SK-N-SH (cell line): ENCODE measurements at regions of chr10 and their contacts with region 1.

Region 1: GRCh38 chr10:93376372-93377293 is 105.5 kb downstream of the MYOF start:
- DNase-seq: peak; percentile 72
- H3K4me3 ChIP-seq: no peak overlapping the region; a peak in 1 of 4 replicates
- H3K27ac ChIP-seq: peak overlapping the region; percentile 55 to 89
- H3K4me1 ChIP-seq: peaks cover 3 to 42% of the 10 kb centered on the region in 2 experiments
- H3K27me3 ChIP-seq: no peaks in the 10 kb centered on the region
- CTCF ChIP-seq: peak; percentile 95
- EP300 ChIP-seq: no peak
- RAD21 ChIP-seq: peak; percentile 98

Region 2: GRCh38 chr10:93062514-93063143 is 314.0 kb before region 1 on chr10:
- CTCF ChIA-PET with region 1: no interaction called
- POLR2A ChIA-PET with region 1: no interaction called
- DNase-seq: peak; percentile 30
- H3K4me3 ChIP-seq: no peak overlapping the region
- H3K27ac ChIP-seq: no peak overlapping the region
- H3K4me1 ChIP-seq: peaks cover 0 to 6% of the 10 kb centered on the region in 2 experiments; a peak in 1 of 4 replicates
- H3K27me3 ChIP-seq: peaks cover 26% of the 10 kb centered on the region
- CTCF ChIP-seq: peak; percentile 13; the same call in 1 of the 2 replicates
- EP300 ChIP-seq: no peak
- RAD21 ChIP-seq: no peak

Region 3: GRCh38 chr10:93352638-93353383 is 23.8 kb before region 1 on chr10:
- CTCF ChIA-PET with region 1: interaction called, 36 read pairs
- POLR2A ChIA-PET with region 1: no interaction called
- DNase-seq: peak; percentile 44
- H3K4me3 ChIP-seq: no peak overlapping the region
- H3K27ac ChIP-seq: no peak overlapping the region
- H3K4me1 ChIP-seq: no peaks in the 10 kb centered on the region
- H3K27me3 ChIP-seq: no peaks in the 10 kb centered on the region
- CTCF ChIP-seq: peak; percentile 83
- EP300 ChIP-seq: no peak
- RAD21 ChIP-seq: peak; percentile 68

Region 4: DNA sequence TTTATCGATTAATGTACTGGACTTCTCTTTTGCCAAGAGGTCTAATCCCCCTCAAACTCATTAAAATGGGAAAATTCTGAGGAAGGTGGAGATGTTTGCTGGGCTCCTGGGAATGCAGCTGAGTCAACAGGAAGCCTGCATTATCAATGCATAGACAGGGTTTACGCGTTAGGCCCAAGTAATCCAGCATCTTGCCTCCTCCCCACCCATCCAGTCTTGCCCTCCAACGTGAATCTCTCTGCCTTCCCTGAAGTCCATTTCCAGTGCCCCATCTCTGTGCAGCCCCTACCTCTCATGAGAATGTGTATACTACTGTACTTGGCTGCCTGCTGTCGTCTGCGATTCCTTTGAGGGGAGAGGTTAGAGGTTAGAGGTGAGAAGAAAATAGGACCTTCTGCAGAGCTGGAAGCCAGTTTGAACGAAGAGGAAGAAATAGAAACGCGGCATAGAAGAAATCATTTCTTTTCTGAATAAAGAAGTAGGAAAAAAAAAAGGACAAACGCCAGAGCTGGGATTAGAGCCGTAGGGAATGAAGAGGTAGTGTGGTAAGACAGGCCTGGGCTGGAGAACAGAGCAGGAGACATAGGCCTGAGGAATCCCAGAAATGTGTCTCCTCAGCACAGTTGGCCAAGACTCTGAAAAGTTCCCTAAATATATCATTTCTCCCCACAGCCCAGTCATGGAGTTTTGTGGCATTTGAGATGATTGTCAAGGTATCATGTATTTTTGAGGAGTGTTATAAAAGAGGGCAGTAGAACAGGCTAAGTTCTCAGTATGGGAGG is 29.9 kb after region 1 on chr10:
- CTCF ChIA-PET with region 1: interaction called, 14 read pairs
- POLR2A ChIA-PET with region 1: no interaction called
- DNase-seq: no peak
- H3K4me3 ChIP-seq: no peak overlapping the region
- H3K27ac ChIP-seq: no peak overlapping the region
- H3K4me1 ChIP-seq: no peaks in the 10 kb centered on the region; a peak in 1 of 4 replicates
- H3K27me3 ChIP-seq: no peaks in the 10 kb centered on the region
- CTCF ChIP-seq: no peak
- EP300 ChIP-seq: no peak
- RAD21 ChIP-seq: no peak

Region 5: GRCh38 chr10:93445097-93445960 is 68.7 kb after region 1 on chr10:
- CTCF ChIA-PET with region 1: interaction called, 23 read pairs
- POLR2A ChIA-PET with region 1: no interaction called
- DNase-seq: peak; percentile 80
- H3K4me3 ChIP-seq: no peak overlapping the region; a peak in 1 of 4 replicates
- H3K27ac ChIP-seq: peak overlapping the region; percentile 78 to 100
- H3K4me1 ChIP-seq: peaks cover 15 to 41% of the 10 kb centered on the region in 2 experiments
- H3K27me3 ChIP-seq: no peaks in the 10 kb centered on the region
- CTCF ChIP-seq: no peak
- EP300 ChIP-seq: no peak
- RAD21 ChIP-seq: no peak

Region 6: GRCh38 chr10:93482145-93482834 is 105.7 kb after region 1 on chr10 and contains the start of gene MYOF:
- CTCF ChIA-PET with region 1: interaction called, 515 read pairs
- POLR2A ChIA-PET with region 1: interaction called, 4 read pairs
- DNase-seq: peak; percentile 65
- H3K4me3 ChIP-seq: peak within 1 kb of the TSS; percentile 59 to 62
- H3K27ac ChIP-seq: peak within 1 kb of the TSS; percentile 78 to 98
- H3K4me1 ChIP-seq: no peaks in the 10 kb centered on the region; a peak in 1 of 4 replicates
- H3K27me3 ChIP-seq: no peaks in the 10 kb centered on the region
- CTCF ChIP-seq: peak; percentile 65
- EP300 ChIP-seq: no peak
- RAD21 ChIP-seq: peak; percentile 91
- polyA plus RNA-seq, gene MYOF: 103 and 134 TPM in 2 replicates

Region 7: DNA sequence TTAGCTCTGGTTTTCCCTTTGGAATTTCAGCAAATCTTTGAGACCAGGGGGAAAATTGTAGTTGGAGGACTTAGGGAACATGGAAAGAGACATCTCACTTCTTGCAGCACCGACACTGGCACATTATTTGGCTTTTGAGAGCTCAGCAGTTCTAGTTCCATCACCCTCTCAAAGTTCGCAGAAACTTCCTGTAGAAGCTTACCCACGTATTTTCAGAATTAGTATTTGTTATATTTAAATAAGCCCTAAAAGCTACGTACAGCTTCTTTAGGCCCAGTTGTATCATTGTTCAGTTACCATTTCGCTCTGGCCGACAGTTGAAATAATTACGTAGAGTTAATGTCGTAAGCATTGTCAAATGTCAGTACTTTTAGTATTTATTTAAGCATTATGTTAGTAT is 133.2 kb after region 1 on chr10:
- CTCF ChIA-PET with region 1: interaction called, 32 read pairs
- POLR2A ChIA-PET with region 1: no interaction called
- DNase-seq: no peak
- H3K4me3 ChIP-seq: no peak overlapping the region
- H3K27ac ChIP-seq: no peak overlapping the region
- H3K4me1 ChIP-seq: peaks cover 0 to 12% of the 10 kb centered on the region in 2 experiments; a peak in 1 of 4 replicates
- H3K27me3 ChIP-seq: no peaks in the 10 kb centered on the region
- CTCF ChIP-seq: no peak
- EP300 ChIP-seq: no peak
- RAD21 ChIP-seq: no peak